H1 (cell line): ENCODE measurements at regions of chr20 and their contacts with region 1.

Region 1: GRCh38 chr20:4956200-4956810 is 45.0 kb downstream of the SLC23A2 start:
- DNase-seq: no peak
- H3K4me3 ChIP-seq: no peak overlapping the region
- H3K27ac ChIP-seq: no peak overlapping the region
- H3K4me1 ChIP-seq: no peaks in the 10 kb centered on the region
- H3K27me3 ChIP-seq: no peaks in the 10 kb centered on the region
- CTCF ChIP-seq: peak in 2 of 3 experiments; percentile 56 to 58; a peak in 2 of 4 replicates
- EP300 ChIP-seq: no peak
- POLR2A ChIP-seq: no peak
- RAD21 ChIP-seq: peak; percentile 75 to 79

Region 2: DNA sequence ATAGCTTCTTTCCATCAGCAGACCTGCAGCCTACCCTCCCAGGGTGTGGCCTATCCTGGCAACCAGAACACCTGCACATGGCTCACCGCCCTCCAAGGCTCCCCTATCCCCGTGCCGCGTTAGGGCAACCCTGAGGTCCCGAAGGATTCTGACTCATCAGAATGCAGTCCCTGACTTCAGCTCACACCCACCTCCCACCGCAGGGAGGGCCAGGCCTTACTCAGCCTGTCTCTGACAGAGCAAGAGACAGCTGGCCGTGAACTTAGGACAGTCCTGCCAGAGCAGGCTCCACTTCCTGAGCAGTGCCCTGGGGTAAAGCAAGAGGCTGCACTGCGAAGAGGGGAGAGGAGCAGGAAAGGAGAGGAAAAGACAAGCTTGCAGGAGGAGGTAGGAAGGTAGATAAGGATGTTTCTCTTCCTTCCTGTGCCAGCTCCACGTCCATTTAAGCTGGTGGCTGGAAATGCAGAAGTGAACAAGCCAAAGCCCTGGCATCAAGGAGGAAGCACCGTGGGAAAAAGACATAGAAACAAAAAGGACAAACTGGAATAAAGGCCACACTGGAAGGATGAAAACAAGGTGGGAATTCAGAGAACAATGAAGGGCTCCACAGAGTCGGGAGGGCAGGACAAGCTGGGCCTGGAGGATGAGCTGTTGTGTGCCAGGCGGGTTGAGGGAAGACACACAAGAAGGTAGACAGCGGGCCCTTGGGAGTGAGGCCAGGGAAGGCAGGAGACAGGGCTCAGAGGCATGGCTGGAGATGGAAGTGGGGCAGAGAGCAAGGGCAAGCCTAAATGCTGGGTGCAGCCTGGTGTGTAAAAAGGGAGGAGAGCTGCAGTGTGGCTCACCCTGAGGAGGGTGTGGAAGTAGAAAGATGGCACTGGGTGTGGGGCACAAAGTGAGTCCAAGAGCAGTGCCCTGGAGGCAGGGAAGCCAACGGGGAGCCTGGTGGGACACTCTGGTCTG is 57.7 kb before region 1 on chr20:
- CTCF ChIA-PET with region 1: interaction called, 12 read pairs
- POLR2A ChIA-PET with region 1: interaction called, 4 read pairs
- DNase-seq: no peak
- H3K4me3 ChIP-seq: no peak overlapping the region
- H3K27ac ChIP-seq: no peak overlapping the region
- H3K4me1 ChIP-seq: peaks cover 0 to 16% (median 10%) of the 10 kb centered on the region in 4 experiments; a peak in 5 of 7 replicates
- H3K27me3 ChIP-seq: no peaks in the 10 kb centered on the region; a peak in 1 of 7 replicates
- CTCF ChIP-seq: no peak
- EP300 ChIP-seq: no peak
- POLR2A ChIP-seq: no peak
- RAD21 ChIP-seq: no peak

Region 3: GRCh38 chr20:5030040-5030874 is 74.0 kb after region 1 on chr20:
- CTCF ChIA-PET with region 1: no interaction called
- POLR2A ChIA-PET with region 1: no interaction called
- DNase-seq: no peak
- H3K4me3 ChIP-seq: no peak overlapping the region
- H3K27ac ChIP-seq: no peak overlapping the region
- H3K4me1 ChIP-seq: no peaks in the 10 kb centered on the region
- H3K27me3 ChIP-seq: no peaks in the 10 kb centered on the region
- CTCF ChIP-seq: no peak
- EP300 ChIP-seq: no peak
- POLR2A ChIP-seq: no peak
- RAD21 ChIP-seq: no peak